OCI-LY7 (cell line): ENCODE measurements at regions of chr15 and their contacts with region 1.

Region 1: GRCh38 chr15:43776718-43777583 is at the start of gene ELL3:
- DNase-seq: peak; percentile 89
- H3K4me3 ChIP-seq: peak within 1 kb of the TSS; percentile 79
- H3K27ac ChIP-seq: peak within 1 kb of the TSS; percentile 91
- H3K4me1 ChIP-seq: peaks cover 66% of the 10 kb centered on the region
- CTCF ChIP-seq: peak; percentile 89
- total RNA-seq, gene ELL3: 296 and 306 TPM in 2 replicates

Region 2: DNA sequence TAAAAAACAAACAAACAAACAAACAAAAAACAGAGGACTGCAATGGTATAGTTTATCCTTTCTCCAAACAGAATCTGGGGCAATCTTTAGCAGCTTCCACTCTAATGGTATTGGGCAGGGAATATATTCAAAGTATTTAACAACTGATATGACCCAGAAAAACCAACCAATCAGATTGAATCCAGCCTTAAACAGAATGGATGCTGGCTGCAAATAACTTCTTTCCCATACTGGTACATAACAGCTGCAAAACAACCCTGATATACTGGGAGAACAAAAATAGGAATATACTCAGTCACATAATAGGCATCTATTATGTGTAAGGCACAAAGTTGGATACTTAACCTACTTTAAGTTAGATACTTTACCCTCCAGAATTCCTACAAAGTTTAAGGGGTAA is 720.3 kb before region 1 on chr15:
- CTCF ChIA-PET with region 1: no interaction called
- POLR2A ChIA-PET with region 1: no interaction called
- intact Hi-C with region 1: no loop called
- DNase-seq: no peak
- H3K4me3 ChIP-seq: no peak overlapping the region
- H3K27ac ChIP-seq: no peak overlapping the region
- H3K4me1 ChIP-seq: no peaks in the 10 kb centered on the region
- CTCF ChIP-seq: no peak

Region 3: DNA sequence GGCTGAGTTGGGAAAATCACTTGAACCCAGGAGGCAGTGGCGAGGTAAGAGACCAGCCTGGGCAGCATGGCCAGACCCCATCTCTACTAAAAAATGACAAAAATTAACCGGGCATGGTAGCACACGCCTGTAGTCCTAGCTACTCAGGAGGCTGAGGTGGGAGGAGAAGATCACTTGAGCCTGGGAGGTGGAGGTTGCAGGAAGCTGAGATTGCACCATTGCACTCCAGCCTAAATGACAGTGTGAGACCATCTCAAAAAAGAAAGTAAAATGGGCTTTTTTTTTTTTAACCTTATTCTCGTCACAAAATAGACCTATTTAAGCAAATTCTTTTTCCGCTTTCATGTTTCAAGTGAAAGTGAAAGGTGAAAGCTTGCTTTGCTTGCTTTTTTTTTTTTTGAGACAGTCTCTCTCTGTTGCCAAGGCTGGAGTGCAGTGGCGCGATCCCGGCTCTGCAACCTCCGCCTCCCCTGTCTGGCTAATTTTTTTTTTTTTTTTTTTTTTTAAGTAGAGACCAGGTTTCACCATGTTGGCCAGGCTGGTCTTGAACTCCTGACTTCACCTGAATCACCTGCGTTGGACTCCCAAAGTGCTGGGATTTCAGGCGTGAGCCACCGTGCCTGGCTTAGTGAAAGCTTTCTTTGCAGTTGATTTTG is 27.1 kb before region 1 on chr15:
- CTCF ChIA-PET with region 1: no interaction called
- POLR2A ChIA-PET with region 1: interaction called, 12 read pairs
- intact Hi-C with region 1: loop called (anchors 2 kb)
- DNase-seq: peak; percentile 92
- H3K4me3 ChIP-seq: peak overlapping the region; percentile 62
- H3K27ac ChIP-seq: peak overlapping the region; percentile 54
- H3K4me1 ChIP-seq: peaks cover 55% of the 10 kb centered on the region
- CTCF ChIP-seq: no peak

Region 4: DNA sequence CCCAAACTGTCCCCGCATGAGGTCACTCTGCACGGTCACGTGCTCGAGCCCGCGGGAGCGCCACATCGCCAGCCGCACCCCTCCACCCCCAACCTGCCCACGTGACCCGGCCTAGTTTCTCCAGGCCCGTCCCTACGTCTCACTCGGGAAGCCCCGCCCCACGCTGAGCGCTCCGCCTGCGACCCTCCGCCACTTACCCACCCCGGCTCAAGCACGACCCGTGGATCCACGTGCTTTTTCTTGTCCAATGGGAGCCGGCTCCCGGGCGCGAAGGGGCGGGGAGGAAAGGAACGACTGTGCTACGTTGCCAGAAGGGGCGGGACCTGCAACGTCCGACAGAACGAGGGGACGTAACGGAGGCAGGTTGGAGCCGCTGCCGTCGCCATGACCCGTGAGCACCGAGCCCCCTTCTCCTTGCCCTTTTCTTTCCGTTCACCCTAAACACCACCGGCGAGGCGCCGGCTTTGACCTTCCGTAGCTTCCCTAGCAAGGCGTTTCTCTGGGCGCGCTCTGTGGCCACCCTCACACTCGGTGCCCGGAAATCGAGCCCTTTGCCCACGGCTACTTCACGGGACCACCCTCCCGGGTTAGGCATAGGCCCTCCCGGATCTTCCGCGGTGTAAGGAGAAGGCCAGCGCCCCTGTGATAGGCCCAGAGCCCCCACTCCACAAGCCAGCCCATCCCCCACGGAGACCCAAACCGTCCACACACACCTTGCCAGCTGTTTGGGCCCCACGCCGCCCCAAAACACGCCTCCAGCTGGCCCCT is 15.2 kb after region 1 on chr15 and contains the start of gene SERF2:
- CTCF ChIA-PET with region 1: interaction called, 5 read pairs
- POLR2A ChIA-PET with region 1: interaction called, 98 read pairs
- intact Hi-C with region 1: loop called (anchors 1 kb)
- DNase-seq: peak; percentile 99
- H3K4me3 ChIP-seq: peak within 1 kb of the TSS; percentile 97
- H3K27ac ChIP-seq: peak within 1 kb of the TSS; percentile 100
- H3K4me1 ChIP-seq: peaks cover 87% of the 10 kb centered on the region
- CTCF ChIP-seq: no peak
- total RNA-seq, gene SERF2: 581 and 622 TPM in 2 replicates

Region 5: GRCh38 chr15:43800286-43801141 is 23.6 kb after region 1 on chr15 and contains the start of gene HYPK:
- CTCF ChIA-PET with region 1: interaction called, 5 read pairs
- POLR2A ChIA-PET with region 1: interaction called, 14 read pairs
- intact Hi-C with region 1: no loop called
- DNase-seq: peak; percentile 93
- H3K4me3 ChIP-seq: peak within 1 kb of the TSS; percentile 92
- H3K27ac ChIP-seq: peak within 1 kb of the TSS; percentile 97
- H3K4me1 ChIP-seq: peaks cover 59% of the 10 kb centered on the region
- CTCF ChIP-seq: no peak
- total RNA-seq, gene HYPK: 16.1 and 25.0 TPM in 2 replicates

Region 6: DNA sequence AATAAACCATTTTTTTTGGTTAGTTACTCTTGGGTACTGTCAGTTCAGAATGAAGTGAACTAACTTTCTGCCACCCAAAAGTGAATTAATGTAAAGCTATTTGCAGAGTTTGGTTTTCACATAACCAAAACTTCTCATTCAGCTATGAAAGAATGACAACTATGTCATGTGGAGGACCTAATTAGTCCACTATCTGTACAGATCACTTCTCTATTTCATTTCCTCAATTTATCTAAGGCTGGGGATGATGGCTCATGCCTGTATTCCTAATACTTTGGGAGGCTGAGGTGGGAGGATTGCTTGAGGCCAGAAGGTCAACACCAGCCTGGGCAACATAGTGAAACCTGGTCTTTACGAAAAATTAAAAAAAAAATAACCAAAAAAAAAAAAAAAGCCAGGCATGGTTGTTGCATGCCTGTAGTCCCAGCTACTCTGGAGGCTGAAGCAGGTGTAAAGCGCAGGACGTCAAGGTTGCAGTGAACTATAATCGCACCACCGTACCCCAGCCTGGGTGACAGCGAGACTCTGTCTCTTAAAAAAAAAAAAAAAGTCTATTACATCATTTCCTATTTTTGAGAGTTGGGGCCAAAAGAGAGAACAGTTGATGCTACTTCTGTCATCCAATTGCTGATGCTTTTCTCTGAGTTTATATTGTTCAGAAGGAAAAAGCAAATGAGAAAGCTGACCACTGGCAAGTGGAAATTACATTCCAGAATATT is 32.2 kb after region 1 on chr15:
- CTCF ChIA-PET with region 1: interaction called, 4 read pairs
- POLR2A ChIA-PET with region 1: interaction called, 20 read pairs
- intact Hi-C with region 1: no loop called
- DNase-seq: peak; percentile 86
- H3K4me3 ChIP-seq: peak overlapping the region; percentile 46
- H3K27ac ChIP-seq: peak overlapping the region; percentile 96
- H3K4me1 ChIP-seq: peaks cover 38% of the 10 kb centered on the region
- CTCF ChIP-seq: no peak

Region 7: DNA sequence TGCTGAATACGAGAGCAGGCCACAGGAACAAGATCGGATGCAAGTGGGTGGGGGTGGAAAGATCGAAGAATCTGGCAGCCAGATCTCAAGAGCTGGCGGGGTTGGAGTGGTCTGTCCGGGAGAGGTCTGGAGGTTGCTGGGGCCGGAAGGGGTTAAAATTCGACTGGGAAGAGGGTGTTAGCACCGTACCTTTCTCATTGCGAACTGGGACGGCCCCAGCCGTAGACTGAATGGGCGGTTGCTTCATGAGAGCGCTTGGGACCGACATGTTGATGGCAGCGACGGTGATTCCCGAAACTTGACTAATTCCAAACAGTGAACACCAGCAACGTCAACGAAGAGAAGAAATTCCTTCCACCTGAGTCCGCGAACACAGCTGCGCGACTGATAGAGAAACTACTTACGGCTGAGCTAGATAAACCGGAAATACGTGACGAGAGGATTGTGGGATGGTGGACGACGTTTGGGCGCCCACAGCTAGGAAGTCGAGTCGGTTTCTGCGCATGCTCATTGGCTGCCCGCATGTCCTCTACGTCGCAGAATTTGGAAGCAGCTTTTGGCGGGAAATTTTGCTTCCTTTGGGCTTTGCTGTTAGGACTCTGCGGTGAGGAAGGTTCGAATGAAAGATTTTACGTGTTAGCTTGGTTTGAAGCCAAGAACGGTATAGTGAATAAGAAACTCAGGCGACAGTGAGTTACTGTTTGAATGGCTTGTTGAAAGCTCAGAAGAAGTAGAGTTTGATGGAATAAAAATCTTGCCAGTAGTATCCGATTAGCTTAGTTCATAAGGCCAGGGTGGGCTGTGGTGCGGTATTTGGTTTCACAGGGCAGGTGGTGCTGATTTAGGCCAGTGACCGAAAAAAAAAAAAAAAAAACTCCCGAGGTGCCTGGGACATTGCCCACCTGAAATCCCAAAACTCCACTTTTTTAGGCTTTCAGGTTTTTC is 47.6 kb after region 1 on chr15 and contains the start of gene MFAP1:
- CTCF ChIA-PET with region 1: interaction called, 3 read pairs
- POLR2A ChIA-PET with region 1: interaction called, 18 read pairs
- intact Hi-C with region 1: loop called (anchors 1 kb)
- DNase-seq: peak; percentile 99
- H3K4me3 ChIP-seq: peak within 1 kb of the TSS; percentile 94
- H3K27ac ChIP-seq: peak within 1 kb of the TSS; percentile 86
- H3K4me1 ChIP-seq: peaks cover 43% of the 10 kb centered on the region
- CTCF ChIP-seq: no peak
- total RNA-seq, gene MFAP1: 25.3 and 43.4 TPM in 2 replicates